Astrocyte of the cerebellum (primary cell): ENCODE measurements at regions of chr5 and their contacts with region 1.

Region 1: GRCh38 chr5:139524932-139525585 is 36.1 kb upstream of the UBE2D2 start:
- DNase-seq: no peak
- H3K4me3 ChIP-seq: no peak overlapping the region
- CTCF ChIP-seq: no peak

Region 2: GRCh38 chr5:139417214-139417613 is 107.8 kb before region 1 on chr5:
- in situ Hi-C with region 1: loop called (anchors 10 kb)
- DNase-seq: no peak
- H3K4me3 ChIP-seq: no peak overlapping the region
- CTCF ChIP-seq: no peak